ENCODE measurements at regions of chr1 and their contacts with region 1.

Region 1: DNA sequence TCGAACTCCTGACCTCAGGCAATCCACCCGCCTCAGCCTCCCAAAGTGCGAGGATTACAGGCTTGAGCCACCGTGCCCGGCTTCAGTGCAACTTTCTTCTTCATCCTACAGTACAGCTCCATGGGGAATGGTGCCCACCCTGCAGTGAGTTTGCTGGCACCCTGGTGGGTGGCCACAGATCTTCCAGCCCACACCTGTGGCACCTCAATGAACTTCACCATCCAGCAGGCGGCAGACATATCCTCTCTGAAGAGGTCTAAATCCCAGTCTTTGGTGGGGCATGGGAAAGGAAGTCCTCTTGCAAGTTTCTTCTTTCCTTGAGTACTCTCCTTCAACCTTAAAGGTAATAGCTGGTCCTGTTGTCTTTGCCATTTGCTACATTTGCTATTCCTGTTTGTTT is 18.1 kb upstream of the ZBTB8A start:
- DNase-seq: no peak
- H3K4me3 Mint-ChIP-seq: peak overlapping the region; percentile 56
- H3K27ac Mint-ChIP-seq: no peak overlapping the region
- H3K4me1 Mint-ChIP-seq: peaks cover 6% of the 10 kb centered on the region
- H3K27me3 Mint-ChIP-seq: peaks cover 10% of the 10 kb centered on the region

Region 2: GRCh38 chr1:32619701-32620485 is 98.7 kb after region 1 on chr1:
- CTCF ChIA-PET with region 1: interaction called, 12 read pairs
- DNase-seq: no peak
- H3K4me3 Mint-ChIP-seq: no peak overlapping the region
- H3K27ac Mint-ChIP-seq: no peak overlapping the region
- H3K4me1 Mint-ChIP-seq: peaks cover 21% of the 10 kb centered on the region
- H3K27me3 Mint-ChIP-seq: no peaks in the 10 kb centered on the region

Region 3: DNA sequence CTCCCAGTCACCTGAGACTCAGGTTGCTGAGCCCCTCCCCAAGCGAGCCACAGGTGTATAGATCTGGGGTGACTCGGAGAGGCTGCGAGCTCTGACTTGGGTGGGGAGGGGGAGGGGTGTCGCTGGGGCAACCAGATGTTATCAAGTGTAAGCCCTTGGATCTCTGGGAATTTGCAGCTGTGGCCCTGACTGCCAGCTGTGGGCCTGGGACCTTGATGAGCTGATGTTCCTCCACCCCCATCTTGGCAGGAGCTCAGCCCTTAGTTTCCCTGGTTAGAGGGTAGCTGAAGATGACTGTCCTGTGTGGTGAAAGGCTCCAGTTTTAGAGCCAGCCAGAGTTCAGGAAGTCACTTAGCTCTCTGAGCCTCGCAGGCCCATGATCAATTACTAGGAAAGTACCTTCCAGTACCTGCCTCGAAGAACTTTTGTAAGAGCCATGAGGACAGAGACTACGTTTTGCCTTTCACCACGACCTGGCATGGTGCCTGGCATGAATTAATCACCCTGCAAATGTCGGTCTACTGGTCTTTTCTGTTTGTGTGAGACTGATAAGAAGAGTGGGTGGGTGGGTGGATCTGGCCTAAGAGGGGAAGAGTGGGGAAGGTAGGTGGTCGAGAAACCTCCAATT is 240.2 kb after region 1 on chr1:
- CTCF ChIA-PET with region 1: interaction called, 11 read pairs
- DNase-seq: no peak
- H3K4me3 Mint-ChIP-seq: no peak overlapping the region
- H3K27ac Mint-ChIP-seq: no peak overlapping the region
- H3K4me1 Mint-ChIP-seq: peaks cover 34% of the 10 kb centered on the region
- H3K27me3 Mint-ChIP-seq: peaks cover 25% of the 10 kb centered on the region

Region 4: GRCh38 chr1:32773018-32773763 is 252.0 kb after region 1 on chr1:
- CTCF ChIA-PET with region 1: interaction called, 13 read pairs
- DNase-seq: peak; percentile 85
- H3K4me3 Mint-ChIP-seq: no peak overlapping the region
- H3K27ac Mint-ChIP-seq: no peak overlapping the region
- H3K4me1 Mint-ChIP-seq: peaks cover 7% of the 10 kb centered on the region
- H3K27me3 Mint-ChIP-seq: no peaks in the 10 kb centered on the region

Region 5: GRCh38 chr1:32870615-32871363 is 349.6 kb after region 1 on chr1 and contains the start of gene FNDC5:
- CTCF ChIA-PET with region 1: interaction called, 10 read pairs
- DNase-seq: no peak
- H3K4me3 Mint-ChIP-seq: peak within 1 kb of the TSS; percentile 41
- H3K27ac Mint-ChIP-seq: no peak within 1 kb of the TSS
- H3K4me1 Mint-ChIP-seq: peaks cover 9% of the 10 kb centered on the region
- H3K27me3 Mint-ChIP-seq: peaks cover 77% of the 10 kb centered on the region